Calu3 (cell line): ENCODE measurements at regions of chr20 and their contacts with region 1.

Region 1: GRCh38 chr20:43456809-43457639 is 672 bp upstream of the SRSF6 start:
- DNase-seq: peak; percentile 89
- H3K4me3 Mint-ChIP-seq: peak overlapping the region; percentile 76
- H3K27ac Mint-ChIP-seq: peak overlapping the region; percentile 95
- H3K4me1 Mint-ChIP-seq: peaks cover 25% of the 10 kb centered on the region
- H3K27me3 Mint-ChIP-seq: peaks cover 19% of the 10 kb centered on the region
- CTCF ChIP-seq: no peak

Region 2: DNA sequence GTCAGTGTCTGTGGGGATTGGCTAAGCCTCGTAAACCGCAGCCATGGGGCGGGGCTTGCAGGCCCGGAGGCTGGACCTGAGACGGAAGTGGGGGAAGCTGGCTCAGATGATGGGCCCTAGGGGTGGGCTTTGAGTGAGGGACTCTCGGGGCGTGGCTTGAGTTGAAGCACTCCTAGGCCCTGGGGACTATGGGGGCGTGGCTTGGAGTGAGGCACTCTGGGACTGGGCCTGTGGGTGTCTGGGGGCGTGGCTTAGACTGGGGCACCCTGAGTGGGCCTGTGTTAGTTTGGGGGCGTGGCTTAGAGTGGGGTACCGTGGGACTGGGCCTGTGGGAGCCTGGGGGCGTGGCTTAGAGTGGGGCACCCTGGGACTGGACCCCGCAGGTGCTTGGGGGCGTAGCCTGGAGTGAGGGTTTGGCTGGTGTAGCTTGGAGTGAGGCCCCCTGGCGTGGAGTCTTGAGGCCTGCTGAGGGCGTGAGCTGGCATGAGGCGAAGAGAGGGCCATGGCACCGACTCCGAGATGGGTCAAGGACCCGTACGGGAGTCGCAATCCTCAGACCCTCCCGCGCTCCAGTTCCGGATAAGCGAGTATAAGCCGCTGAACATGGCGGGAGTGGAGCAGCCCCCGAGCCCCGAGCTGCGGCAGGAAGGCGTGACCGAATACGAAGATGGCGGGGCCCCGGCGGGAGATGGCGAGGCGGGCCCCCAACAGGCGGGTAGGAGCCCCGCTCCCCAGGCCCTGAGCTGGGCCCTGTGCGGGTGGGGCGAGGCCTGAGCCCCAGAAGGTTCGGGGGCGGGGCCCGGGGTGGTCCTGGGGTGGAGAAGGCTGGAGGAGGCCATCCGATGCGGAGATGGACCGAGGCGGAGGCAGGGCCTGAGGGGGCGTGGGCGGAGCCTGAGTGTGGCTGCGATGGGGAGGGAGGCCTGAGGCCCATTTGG is 57.3 kb after region 1 on chr20:
- CTCF ChIA-PET with region 1: interaction called, 11 read pairs
- intact Hi-C with region 1: loop called (anchors 5 kb)
- DNase-seq: peak; percentile 100
- H3K4me3 Mint-ChIP-seq: peak overlapping the region; percentile 97
- H3K27ac Mint-ChIP-seq: peak overlapping the region; percentile 89
- H3K4me1 Mint-ChIP-seq: peaks cover 23% of the 10 kb centered on the region
- H3K27me3 Mint-ChIP-seq: no peaks in the 10 kb centered on the region
- CTCF ChIP-seq: peak; percentile 40

Region 3: GRCh38 chr20:43590392-43591323 is 133.6 kb after region 1 on chr20 and contains the start of gene IFT52:
- CTCF ChIA-PET with region 1: interaction called, 3 read pairs
- intact Hi-C with region 1: loop called (anchors 5 kb)
- DNase-seq: peak; percentile 97
- H3K4me3 Mint-ChIP-seq: peak within 1 kb of the TSS; percentile 99
- H3K27ac Mint-ChIP-seq: peak within 1 kb of the TSS; percentile 81
- H3K4me1 Mint-ChIP-seq: peaks cover 21% of the 10 kb centered on the region
- H3K27me3 Mint-ChIP-seq: no peaks in the 10 kb centered on the region
- CTCF ChIP-seq: no peak
- total RNA-seq, gene IFT52: 30.2 and 30.8 TPM in 2 replicates

Region 4: GRCh38 chr20:43840382-43841070 is 383.5 kb after region 1 on chr20:
- CTCF ChIA-PET with region 1: no interaction called
- intact Hi-C with region 1: loop called (anchors 10 kb)
- DNase-seq: peak; percentile 42
- H3K4me3 Mint-ChIP-seq: no peak overlapping the region
- H3K27ac Mint-ChIP-seq: no peak overlapping the region
- H3K4me1 Mint-ChIP-seq: no peaks in the 10 kb centered on the region
- H3K27me3 Mint-ChIP-seq: peaks cover 88% of the 10 kb centered on the region
- CTCF ChIP-seq: peak; percentile 67

Region 5: GRCh38 chr20:43925801-43926200 is 468.8 kb after region 1 on chr20:
- CTCF ChIA-PET with region 1: no interaction called
- intact Hi-C with region 1: no loop called
- DNase-seq: peak; percentile 46
- H3K4me3 Mint-ChIP-seq: no peak overlapping the region
- H3K27ac Mint-ChIP-seq: no peak overlapping the region
- H3K4me1 Mint-ChIP-seq: no peaks in the 10 kb centered on the region
- H3K27me3 Mint-ChIP-seq: peaks cover 100% of the 10 kb centered on the region
- CTCF ChIP-seq: no peak

Region 6: DNA sequence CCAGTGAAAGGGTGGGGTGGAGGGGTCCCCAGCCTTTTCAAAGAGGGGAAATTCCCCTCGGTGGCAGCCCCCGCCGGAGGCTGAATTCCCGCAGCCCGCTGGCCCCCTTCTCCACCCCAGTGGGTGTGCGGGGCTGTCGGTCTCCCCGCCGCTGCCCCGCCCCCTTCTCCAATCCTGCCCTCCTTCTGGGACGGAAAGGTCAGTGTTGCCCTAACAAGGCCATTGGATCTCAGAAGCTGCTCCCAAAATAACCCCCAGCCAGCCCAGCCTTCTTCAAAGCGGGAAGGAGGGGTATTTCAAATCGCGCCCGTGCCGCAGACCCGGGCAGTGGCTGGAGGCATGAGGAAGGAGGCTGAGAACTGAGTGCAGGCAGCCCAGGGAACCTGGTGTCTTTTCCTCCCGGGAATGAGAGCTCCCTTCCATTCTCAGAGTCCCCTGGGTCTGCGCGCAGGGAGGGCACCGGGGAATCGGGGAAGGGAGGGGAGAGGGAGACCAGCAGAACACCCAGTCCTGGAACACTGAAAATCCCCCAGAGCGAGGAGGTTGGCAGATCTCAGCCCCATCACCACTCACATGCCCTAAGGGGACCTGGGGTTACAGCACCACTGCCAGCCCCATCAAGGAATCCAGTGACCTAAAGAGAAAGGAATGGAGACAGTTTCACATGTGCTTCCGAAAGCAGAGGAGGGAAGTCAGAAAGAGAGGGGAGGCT is 730.2 kb after region 1 on chr20 and contains the start of gene JPH2:
- CTCF ChIA-PET with region 1: no interaction called
- intact Hi-C with region 1: loop called (anchors 5 kb)
- DNase-seq: peak; percentile 44
- H3K4me3 Mint-ChIP-seq: peak within 1 kb of the TSS; percentile 63
- H3K27ac Mint-ChIP-seq: no peak within 1 kb of the TSS
- H3K4me1 Mint-ChIP-seq: peaks cover 16% of the 10 kb centered on the region
- H3K27me3 Mint-ChIP-seq: peaks cover 15% of the 10 kb centered on the region
- CTCF ChIP-seq: no peak
- total RNA-seq, gene JPH2: 0.50 and 0.59 TPM in 2 replicates